ENCODE measurements at regions of chr17 and their contacts with region 1.

Region 1: DNA sequence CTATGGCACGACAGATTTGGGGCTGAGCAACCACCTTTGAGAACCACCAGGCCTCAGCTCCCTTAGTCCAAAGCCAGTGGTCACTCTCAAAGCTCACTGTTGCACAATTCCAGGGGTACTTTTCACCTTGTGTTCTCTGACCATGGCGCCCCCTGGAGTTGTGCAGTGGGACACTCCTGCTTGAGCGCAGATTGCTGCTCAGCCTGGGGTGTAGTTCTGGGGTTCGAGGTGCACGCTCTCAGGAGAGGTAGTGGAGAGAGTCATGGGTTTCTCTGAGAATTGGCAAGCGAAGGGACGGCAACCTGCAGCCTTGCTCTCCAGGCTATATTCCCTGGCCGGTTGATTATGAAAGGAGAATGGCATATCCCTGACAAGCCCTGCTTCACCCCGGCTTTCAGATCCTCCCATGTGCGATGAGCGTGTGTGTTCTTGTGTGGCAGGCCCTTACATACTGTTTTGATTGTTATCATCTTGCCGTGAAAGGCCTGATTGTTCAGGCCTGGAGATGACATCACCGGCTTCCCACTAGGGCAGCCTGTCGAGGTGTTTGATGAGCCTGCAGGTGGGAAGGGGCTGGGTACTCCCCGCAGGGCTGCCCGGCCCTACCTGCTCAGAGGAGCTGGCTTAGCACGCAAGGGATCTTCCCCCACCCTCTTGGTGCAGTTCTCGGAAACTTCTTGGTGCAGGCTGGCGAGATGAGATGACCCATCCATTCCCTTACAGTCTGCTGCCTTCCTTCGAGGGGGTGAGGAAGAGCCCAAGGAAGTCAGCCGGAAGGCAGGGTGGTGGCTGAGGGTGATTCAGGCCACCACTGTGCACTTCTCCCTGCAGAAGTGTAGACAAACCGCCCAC is 431.2 kb downstream of the SLC39A11 start:
- DNase-seq: peak; percentile 97
- ATAC-seq: peak; percentile 85
- H3K4me3 ChIP-seq: peak overlapping the region in 1 of 2 experiments; percentile 39; a peak in 2 of 4 replicates
- H3K27ac ChIP-seq: peak overlapping the region; percentile 82
- H3K4me1 ChIP-seq: peaks cover 50 to 66% of the 10 kb centered on the region in 2 experiments
- H3K27me3 ChIP-seq: no peaks in the 10 kb centered on the region
- CTCF ChIP-seq: peak in 2 of 3 experiments; percentile 89 to 99; a peak in 4 of 6 replicates
- POLR2A ChIP-seq: no peak
- RAD21 ChIP-seq: peak; percentile 41; the same call in 1 of the 2 replicates

Region 2: GRCh38 chr17:72609501-72609900 is 51.8 kb before region 1 on chr17:
- CTCF ChIA-PET with region 1: interaction called, 3 read pairs
- POLR2A ChIA-PET with region 1: no interaction called
- RAD21 ChIA-PET with region 1: no interaction called
- intact Hi-C with region 1: loop called (anchors 1 kb)
- DNase-seq: peak; percentile 86
- ATAC-seq: peak; percentile 66
- H3K4me3 ChIP-seq: peak overlapping the region in 1 of 2 experiments; percentile 1; a peak in 2 of 4 replicates
- H3K27ac ChIP-seq: peak overlapping the region; percentile 48; the same call in 1 of the 2 replicates
- H3K4me1 ChIP-seq: peaks cover 29 to 58% of the 10 kb centered on the region in 2 experiments
- H3K27me3 ChIP-seq: no peaks in the 10 kb centered on the region
- CTCF ChIP-seq: no peak
- POLR2A ChIP-seq: no peak
- RAD21 ChIP-seq: peak; percentile 34; the same call in 1 of the 2 replicates

Region 3: DNA sequence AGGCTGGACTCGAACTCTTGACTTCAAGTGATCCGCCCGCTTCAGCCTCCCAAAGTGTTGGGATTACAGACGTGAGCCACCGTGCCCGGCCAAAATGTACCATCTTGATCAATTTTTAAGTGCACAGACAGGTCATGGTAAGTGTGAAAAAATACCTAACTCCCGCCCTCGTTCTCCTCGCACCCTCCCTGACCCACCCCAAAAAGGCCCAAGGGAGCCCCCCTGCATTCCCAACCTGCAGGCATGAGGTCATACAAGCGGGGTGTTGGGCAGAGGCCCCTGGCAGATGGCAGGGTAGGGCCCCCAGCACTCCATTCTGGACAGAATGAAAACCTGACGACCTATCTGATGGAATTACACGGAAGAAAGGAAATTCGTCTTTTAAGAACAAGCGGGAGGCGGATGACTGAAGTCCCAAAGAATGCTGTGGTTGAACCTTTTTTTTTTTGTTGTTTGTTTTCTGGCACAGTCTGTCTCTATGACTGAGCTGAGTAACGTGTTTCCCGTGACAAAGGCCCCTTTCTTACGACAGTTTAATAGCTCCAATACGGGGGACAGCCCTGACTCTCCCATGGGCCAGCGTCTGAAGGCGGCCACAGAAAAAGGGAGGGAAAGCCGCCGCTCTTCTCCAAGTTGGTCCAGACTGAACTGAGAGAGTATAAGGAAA is 54.7 kb after region 1 on chr17:
- CTCF ChIA-PET with region 1: interaction called, 3 read pairs
- POLR2A ChIA-PET with region 1: interaction called, 21 read pairs
- RAD21 ChIA-PET with region 1: interaction called, 4 read pairs
- intact Hi-C with region 1: loop called (anchors 1 kb)
- DNase-seq: peak; percentile 100
- ATAC-seq: peak; percentile 87
- H3K4me3 ChIP-seq: peak overlapping the region in 1 of 2 experiments; percentile 33; a peak in 2 of 4 replicates
- H3K27ac ChIP-seq: peak overlapping the region; percentile 82
- H3K4me1 ChIP-seq: peaks cover 46 to 64% of the 10 kb centered on the region in 2 experiments
- H3K27me3 ChIP-seq: no peaks in the 10 kb centered on the region
- CTCF ChIP-seq: no peak
- POLR2A ChIP-seq: no peak
- RAD21 ChIP-seq: peak; percentile 62